ENCODE measurements at regions of chr4 and their contacts with region 1.

Region 1: GRCh38 chr4:183722731-183723560 is 63.9 kb downstream of the TRAPPC11 start:
- DNase-seq: peak; percentile 59
- H3K4me3 Mint-ChIP-seq: peak overlapping the region; percentile 72
- H3K27ac Mint-ChIP-seq: peak overlapping the region; percentile 44
- H3K4me1 Mint-ChIP-seq: peaks cover 14% of the 10 kb centered on the region
- H3K27me3 Mint-ChIP-seq: peaks cover 19% of the 10 kb centered on the region

Region 2: GRCh38 chr4:183618681-183619080 is 104.3 kb before region 1 on chr4:
- CTCF ChIA-PET with region 1: interaction called, 11 read pairs
- POLR2A ChIA-PET with region 1: no interaction called
- DNase-seq: no peak
- H3K4me3 Mint-ChIP-seq: no peak overlapping the region
- H3K27ac Mint-ChIP-seq: no peak overlapping the region
- H3K4me1 Mint-ChIP-seq: peaks cover 2% of the 10 kb centered on the region
- H3K27me3 Mint-ChIP-seq: peaks cover 16% of the 10 kb centered on the region

Region 3: DNA sequence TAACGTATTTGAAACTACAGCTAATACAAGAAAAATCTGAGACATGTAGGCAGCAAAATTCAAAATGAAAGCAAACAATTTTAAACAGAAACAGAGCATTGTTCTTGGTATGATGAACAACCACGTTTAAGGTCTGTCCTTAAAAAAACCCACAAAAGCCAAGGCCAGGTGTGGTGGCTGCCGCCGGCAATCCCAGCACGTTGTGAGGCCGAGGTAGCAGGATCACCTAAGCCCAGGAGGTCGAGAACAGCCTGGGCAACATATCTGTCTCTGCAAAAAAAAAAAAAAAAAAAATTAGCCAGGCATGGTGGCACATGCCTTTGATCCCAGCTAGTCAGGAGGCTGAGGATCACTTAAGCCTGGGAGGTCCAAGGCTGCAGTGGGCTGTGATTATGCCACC is 77.6 kb before region 1 on chr4:
- CTCF ChIA-PET with region 1: no interaction called
- POLR2A ChIA-PET with region 1: no interaction called
- DNase-seq: no peak
- H3K4me3 Mint-ChIP-seq: no peak overlapping the region
- H3K27ac Mint-ChIP-seq: no peak overlapping the region
- H3K4me1 Mint-ChIP-seq: no peaks in the 10 kb centered on the region
- H3K27me3 Mint-ChIP-seq: no peaks in the 10 kb centered on the region

Measured in activated CD4-positive, alpha-beta memory T cell treated with anti-CD3 and anti-CD28 coated beads, Interleukin-2, amount 10 ng/mL, durations not matched to agents 7 days and 5 days (primary cell).